ENCODE measurements at regions of chr10 and their contacts with region 1.

Region 1: GRCh38 chr10:94439275-94439861 is 37.0 kb downstream of the TBC1D12 start:
- DNase-seq: no peak
- H3K4me3 ChIP-seq: peak overlapping the region in 1 of 59 donors; percentile 6
- H3K27ac ChIP-seq: peak overlapping the region in 18 of 59 donors; percentile 1 to 63 (median 22)
- H3K27me3 ChIP-seq: no peaks in the 10 kb centered on the region
- CTCF ChIP-seq: peak in 30 of 56 donors; percentile 9 to 59 (median 27)

Region 2: DNA sequence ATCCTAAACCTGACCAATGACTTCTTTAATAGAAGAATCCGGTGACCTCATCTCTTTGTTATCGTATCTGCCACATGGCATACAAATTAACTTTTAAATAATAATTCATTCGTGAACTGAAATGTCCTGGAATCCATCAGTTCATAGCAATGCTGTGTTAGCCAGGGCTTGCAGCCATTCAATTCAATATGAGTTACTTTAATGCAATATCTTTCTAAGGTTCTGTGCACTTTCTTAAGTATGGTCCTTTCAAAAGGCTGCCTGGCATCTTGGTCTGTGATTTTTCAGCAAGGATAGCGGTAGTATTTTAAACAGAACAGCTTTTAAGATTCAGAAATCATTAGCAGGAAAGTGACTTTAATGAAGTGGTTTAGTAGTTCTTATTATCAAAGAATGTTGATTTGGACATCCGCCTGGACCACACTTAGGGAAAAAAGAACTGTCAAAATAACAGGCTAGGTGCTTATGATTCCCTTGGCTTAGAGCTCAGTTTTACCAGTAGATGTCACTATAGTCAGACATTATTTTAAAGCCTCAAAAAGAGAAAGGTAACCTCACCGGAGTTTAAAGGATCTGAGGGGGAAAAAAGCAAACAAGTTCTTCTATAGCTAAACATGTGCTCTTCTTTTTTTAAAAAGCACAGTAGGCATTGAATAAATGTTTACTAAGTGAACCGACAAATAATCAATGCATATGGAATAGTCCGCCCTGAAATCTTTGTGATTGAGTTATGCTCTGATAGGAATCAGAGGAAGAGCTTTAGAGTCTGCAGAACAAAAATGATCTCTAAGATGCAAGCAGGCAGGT is 522.9 kb before region 1 on chr10:
- intact Hi-C with region 1: loop called in 1 of 2 experiments (anchors 10 kb)
- DNase-seq: no peak
- H3K4me3 ChIP-seq: peak overlapping the region in 12 of 59 donors; percentile 7 to 41 (median 30)
- H3K27ac ChIP-seq: no peak overlapping the region
- H3K27me3 ChIP-seq: no peaks in the 10 kb centered on the region
- CTCF ChIP-seq: peak; percentile 27 to 78 (median 58)

Region 3: DNA sequence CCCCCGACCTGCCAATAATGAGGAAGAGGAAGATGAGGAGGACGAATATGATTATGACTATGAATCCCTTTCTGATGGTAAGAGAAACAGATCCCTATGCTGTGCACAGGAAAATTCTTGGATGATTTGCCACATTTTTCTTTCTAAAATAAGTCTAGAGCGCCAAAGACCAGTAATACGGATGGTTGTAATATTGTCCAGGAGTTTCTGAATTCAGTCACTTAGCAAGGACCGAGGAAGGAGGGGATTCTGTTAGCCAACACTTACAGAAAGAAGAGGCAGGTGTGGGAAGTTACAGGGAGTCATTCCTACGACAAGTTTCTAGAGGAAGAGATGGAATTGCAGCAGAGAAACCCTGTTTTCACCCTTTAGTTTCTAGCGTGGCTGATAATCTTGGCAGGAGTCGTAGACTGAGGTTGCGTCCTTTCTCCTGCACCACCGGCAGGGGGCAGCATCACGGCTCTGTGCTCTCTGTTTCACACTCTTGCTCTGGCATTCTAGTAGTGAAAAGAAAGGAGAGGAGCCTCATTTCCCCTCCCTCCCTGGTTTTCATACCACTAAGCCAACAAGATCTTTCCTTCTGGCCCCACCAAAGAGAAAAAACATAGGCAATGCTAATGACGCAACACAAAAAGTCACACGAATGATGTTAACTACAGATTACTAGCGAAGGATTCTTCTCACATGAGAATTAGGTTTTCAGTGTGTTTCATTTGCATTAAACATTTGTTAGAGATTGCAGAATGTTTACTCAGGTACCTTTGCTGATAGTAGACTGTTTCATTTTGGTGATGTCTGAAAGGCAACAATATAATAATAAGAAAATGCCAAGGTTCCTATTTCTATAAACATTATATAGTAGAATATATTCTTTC is 159.3 kb before region 1 on chr10:
- intact Hi-C with region 1: loop called (anchors 2 to 10 kb)
- DNase-seq: peak in 3 of 10 donors; percentile 7 to 63 (median 32)
- H3K4me3 ChIP-seq: peak overlapping the region in 1 of 59 donors; percentile 30
- H3K27ac ChIP-seq: peak overlapping the region in 1 of 59 donors; percentile 9
- H3K27me3 ChIP-seq: no peaks in the 10 kb centered on the region
- CTCF ChIP-seq: peak; percentile 62 to 91 (median 80)

Region 4: GRCh38 chr10:94320285-94320914 is 119.0 kb before region 1 on chr10:
- intact Hi-C with region 1: no loop called
- DNase-seq: peak; percentile 40 to 81 (median 59)
- H3K4me3 ChIP-seq: no peak overlapping the region
- H3K27ac ChIP-seq: no peak overlapping the region
- H3K27me3 ChIP-seq: no peaks in the 10 kb centered on the region
- CTCF ChIP-seq: peak; percentile 81 to 99 (median 92)

Region 5: DNA sequence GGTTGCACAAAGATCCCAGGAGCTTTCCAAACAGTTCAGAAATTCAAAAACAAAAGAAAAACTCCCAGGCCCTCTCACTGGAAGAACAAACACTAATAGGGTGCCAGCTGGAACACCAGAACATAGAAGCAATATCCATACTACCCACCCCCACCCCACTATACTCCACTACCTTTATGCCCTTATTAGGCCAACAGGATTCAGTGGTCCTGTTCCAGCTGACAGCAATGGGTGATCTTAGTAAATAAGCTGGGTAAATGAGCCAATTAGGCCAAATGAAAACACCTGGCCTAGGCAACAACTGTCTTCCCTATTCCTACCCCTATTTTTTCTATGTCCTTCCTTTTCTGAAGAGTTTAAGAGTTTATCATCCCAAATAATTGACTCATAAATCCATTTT is 88.3 kb before region 1 on chr10:
- intact Hi-C with region 1: no loop called
- DNase-seq: no peak
- H3K4me3 ChIP-seq: no peak overlapping the region
- H3K27ac ChIP-seq: no peak overlapping the region
- H3K27me3 ChIP-seq: no peaks in the 10 kb centered on the region
- CTCF ChIP-seq: no peak

Region 6: DNA sequence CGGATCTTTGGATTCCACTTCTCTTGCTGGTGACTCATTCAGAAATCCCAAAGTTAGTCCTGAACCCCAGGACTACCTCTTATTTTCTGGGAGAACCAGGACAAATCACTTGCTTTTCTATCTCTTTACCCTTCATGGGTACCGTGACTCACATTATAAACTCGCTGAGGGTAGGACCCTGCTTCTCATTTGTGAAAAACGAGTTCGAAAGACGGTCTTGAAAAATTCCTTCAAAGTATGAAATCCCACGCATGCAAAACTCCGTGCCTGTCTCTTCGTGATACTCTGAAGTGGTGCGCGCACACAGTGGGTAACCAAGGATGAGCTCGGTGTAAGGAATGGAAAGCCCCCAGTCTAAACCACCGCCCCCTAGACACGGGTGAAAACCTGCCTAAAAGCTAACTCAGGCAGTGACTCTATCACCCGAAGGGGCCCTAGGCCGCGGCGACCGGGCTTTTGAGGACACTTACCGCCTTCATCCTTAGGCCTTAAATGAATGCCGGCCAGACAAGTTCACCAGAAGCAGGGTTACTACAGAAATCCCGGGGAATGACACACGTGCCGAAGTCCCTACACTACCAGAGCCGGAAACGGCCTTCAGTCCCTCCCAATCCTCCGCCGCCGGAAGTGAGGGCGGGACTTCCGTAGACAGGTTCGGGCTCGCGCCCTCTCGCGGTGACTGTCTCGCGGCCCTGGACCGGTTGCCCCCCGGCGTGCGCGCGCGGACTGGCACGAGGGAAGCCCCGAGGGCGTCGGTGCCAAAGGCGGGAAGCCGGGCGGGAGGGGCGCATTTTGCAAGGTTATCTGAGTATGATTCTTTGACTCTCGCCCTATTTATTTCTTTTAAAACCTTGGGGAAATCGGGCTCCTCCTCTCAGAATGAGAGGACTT is 76.8 kb before region 1 on chr10 and contains the start of gene NOC3L:
- intact Hi-C with region 1: loop called (anchors 2 to 5 kb)
- DNase-seq: peak; percentile 94 to 97 (median 96)
- H3K4me3 ChIP-seq: peak within 1 kb of the TSS; percentile 40 to 96 (median 81)
- H3K27ac ChIP-seq: peak within 1 kb of the TSS in 56 of 59 donors; percentile 7 to 100 (median 82)
- H3K27me3 ChIP-seq: no peaks in the 10 kb centered on the region
- CTCF ChIP-seq: peak; percentile 81 to 100 (median 97)
- total RNA-seq, gene NOC3L: 6.0 to 19.1 (median 12.2) TPM

Region 7: GRCh38 chr10:94402015-94402842 is 37.1 kb before region 1 on chr10 and contains the start of gene TBC1D12:
- intact Hi-C with region 1: loop called (anchors 2 to 5 kb)
- DNase-seq: peak; percentile 94 to 97 (median 96)
- H3K4me3 ChIP-seq: peak within 1 kb of the TSS; percentile 59 to 98 (median 93)
- H3K27ac ChIP-seq: peak within 1 kb of the TSS; percentile 80 to 99 (median 96)
- H3K27me3 ChIP-seq: no peaks in the 10 kb centered on the region
- CTCF ChIP-seq: peak in 43 of 56 donors; percentile 2 to 63 (median 32)
- total RNA-seq, gene TBC1D12: 13.7 to 84.3 (median 27.5) TPM

Measured in dorsolateral prefrontal cortex (tissue), 120 donors.